H1 (cell line): ENCODE measurements at regions of chr12 and their contacts with region 1.

Region 1: GRCh38 chr12:68358532-68359485 is 26.6 kb upstream of the MDM1 start:
- DNase-seq: peak in 1 of 2 experiments; percentile 51
- H3K4me3 ChIP-seq: peak overlapping the region in 1 of 4 experiments; percentile 51; a peak in 4 of 8 replicates
- H3K27ac ChIP-seq: no peak overlapping the region
- H3K4me1 ChIP-seq: peaks cover 0 to 3% (median under 1%) of the 10 kb centered on the region in 4 experiments; a peak in 2 of 7 replicates
- H3K27me3 ChIP-seq: no peaks in the 10 kb centered on the region; a peak in 1 of 7 replicates
- CTCF ChIP-seq: peak in 2 of 3 experiments; percentile 26 to 69; a peak in 2 of 4 replicates
- EP300 ChIP-seq: peak in 1 of 2 experiments; percentile 63; a peak in 1 of 3 replicates
- POLR2A ChIP-seq: peak in 1 of 2 experiments; percentile 50; a peak in 2 of 3 replicates
- RAD21 ChIP-seq: peak; percentile 68 to 73

Region 2: DNA sequence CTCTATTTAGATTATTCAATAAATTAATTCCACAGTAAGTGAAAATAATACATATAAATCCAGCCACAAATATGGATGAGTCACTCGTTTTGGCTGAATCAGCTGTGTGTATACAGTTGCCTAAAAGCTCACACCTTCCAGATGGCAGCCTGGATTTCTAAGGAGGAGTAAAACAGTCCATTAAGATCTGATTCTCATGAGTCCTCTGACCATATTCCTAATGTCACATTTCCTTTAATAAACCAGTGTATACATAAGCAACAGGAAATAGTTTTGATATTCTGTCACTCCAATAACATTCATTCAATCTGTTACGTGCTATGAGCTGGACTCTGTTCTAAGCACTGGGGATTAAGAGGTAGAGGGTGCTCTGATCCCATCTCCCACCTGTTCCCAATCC is 48.4 kb before region 1 on chr12:
- CTCF ChIA-PET with region 1: no interaction called
- POLR2A ChIA-PET with region 1: no interaction called
- DNase-seq: no peak
- H3K4me3 ChIP-seq: no peak overlapping the region
- H3K27ac ChIP-seq: no peak overlapping the region
- H3K4me1 ChIP-seq: no peaks in the 10 kb centered on the region
- H3K27me3 ChIP-seq: no peaks in the 10 kb centered on the region
- CTCF ChIP-seq: no peak
- EP300 ChIP-seq: no peak
- POLR2A ChIP-seq: no peak
- RAD21 ChIP-seq: no peak

Region 3: DNA sequence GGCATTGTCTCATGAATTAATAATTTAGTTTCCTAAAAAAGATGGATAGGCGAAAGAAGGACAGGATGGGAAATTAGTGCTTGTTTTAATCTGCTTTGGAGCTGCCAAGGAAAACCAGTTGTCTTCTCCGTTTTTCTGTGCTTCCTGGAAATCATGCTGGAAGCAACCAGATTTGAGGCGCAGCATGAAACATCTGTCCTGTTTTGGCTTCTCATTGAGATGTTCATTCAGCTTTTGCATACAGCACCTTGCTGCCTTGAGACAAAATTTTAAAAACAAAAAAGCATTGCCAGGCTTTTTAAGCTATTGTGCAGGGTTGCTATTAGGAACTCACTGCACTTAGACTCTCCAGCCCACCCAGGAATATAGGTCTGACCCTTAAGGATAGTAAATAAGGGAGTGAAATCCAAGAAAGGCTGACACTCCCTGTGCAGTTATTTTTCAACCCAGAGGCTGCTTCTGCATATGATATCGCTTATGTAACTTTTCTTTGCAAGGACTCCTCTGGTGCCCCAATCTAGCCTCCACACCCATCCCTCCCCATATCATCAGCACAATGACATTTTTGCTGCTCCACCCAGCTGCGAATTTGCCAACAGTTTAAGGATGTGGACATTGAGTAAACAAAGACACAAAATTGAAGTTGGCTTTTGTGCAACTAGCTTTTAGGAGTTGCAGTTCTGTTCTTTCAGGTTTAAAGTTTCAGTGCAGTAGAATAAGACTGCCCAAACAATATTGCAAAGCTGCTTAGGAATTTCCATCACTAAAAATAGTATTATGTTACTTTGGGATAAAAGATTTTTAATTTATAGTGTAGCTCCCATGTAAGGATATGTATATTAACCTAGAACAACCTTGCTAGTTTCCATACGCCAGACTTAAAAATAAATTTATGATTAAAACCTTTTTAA is 20.3 kb after region 1 on chr12:
- CTCF ChIA-PET with region 1: interaction called, 13 read pairs
- POLR2A ChIA-PET with region 1: interaction called, 3 read pairs
- DNase-seq: no peak
- H3K4me3 ChIP-seq: no peak overlapping the region
- H3K27ac ChIP-seq: no peak overlapping the region
- H3K4me1 ChIP-seq: peaks cover 0 to 11% (median 1%) of the 10 kb centered on the region in 4 experiments; a peak in 3 of 7 replicates
- H3K27me3 ChIP-seq: no peaks in the 10 kb centered on the region
- CTCF ChIP-seq: no peak
- EP300 ChIP-seq: no peak
- POLR2A ChIP-seq: no peak
- RAD21 ChIP-seq: no peak

Region 4: DNA sequence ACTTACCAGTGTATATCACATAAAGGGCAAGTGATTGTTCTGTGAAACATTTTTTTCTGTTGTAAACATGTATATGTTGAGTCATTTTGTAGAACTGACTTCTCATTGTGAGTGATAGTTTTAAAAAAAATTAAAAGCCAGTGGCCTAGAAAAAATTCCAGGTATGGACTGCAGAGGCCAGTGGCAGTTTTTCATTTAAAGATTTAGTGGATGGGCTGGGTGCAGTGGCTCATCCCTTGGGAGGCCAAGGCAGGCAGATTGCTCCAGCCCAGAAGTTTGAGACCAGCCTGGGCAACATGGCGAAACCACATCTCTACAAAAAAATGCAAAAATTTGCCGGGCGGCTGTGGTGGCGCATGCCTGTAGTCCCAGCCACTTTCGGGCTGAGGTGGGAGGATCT is 58.0 kb after region 1 on chr12:
- CTCF ChIA-PET with region 1: no interaction called
- POLR2A ChIA-PET with region 1: no interaction called
- DNase-seq: no peak
- H3K4me3 ChIP-seq: no peak overlapping the region
- H3K27ac ChIP-seq: no peak overlapping the region
- H3K4me1 ChIP-seq: peaks cover 0 to 8% (median 0%) of the 10 kb centered on the region in 4 experiments; a peak in 2 of 7 replicates
- H3K27me3 ChIP-seq: no peaks in the 10 kb centered on the region
- CTCF ChIP-seq: no peak
- EP300 ChIP-seq: no peak
- POLR2A ChIP-seq: no peak
- RAD21 ChIP-seq: no peak

Region 5: DNA sequence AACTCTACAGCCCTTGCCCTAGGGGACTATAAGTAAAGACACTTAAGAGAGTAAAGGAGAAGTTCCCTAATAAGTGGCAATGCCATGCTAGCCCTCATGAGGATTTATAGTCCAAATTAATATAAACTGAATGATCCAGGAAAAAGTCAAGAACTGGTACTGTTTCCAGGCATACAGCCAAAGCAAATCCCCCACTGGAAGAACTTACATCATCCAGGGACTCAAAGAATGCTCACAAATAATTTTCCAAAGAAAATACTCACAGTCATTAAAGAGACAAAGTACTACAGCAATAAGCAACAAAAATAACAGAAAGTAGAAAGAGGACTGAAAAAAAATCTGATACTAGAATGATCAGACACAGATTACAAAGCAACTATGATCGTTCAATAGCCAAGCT is 172.2 kb after region 1 on chr12:
- CTCF ChIA-PET with region 1: no interaction called
- POLR2A ChIA-PET with region 1: no interaction called
- DNase-seq: no peak
- H3K4me3 ChIP-seq: no peak overlapping the region
- H3K27ac ChIP-seq: no peak overlapping the region
- H3K4me1 ChIP-seq: no peaks in the 10 kb centered on the region
- H3K27me3 ChIP-seq: no peaks in the 10 kb centered on the region
- CTCF ChIP-seq: no peak
- EP300 ChIP-seq: no peak
- POLR2A ChIP-seq: no peak
- RAD21 ChIP-seq: no peak